Activated CD4-positive, alpha-beta memory T cell treated with anti-CD3 and anti-CD28 coated beads for 36 hours (primary cell): ENCODE measurements at regions of chrX and their contacts with region 1.

Region 1: GRCh38 chrX:68196939-68197791 is 236.1 kb downstream of the OPHN1 start:
- DNase-seq: peak; percentile 20
- H3K4me3 Mint-ChIP-seq: no peak overlapping the region
- H3K27ac Mint-ChIP-seq: no peak overlapping the region
- H3K4me1 Mint-ChIP-seq: peaks cover 9% of the 10 kb centered on the region
- H3K27me3 Mint-ChIP-seq: no peaks in the 10 kb centered on the region

Region 2: DNA sequence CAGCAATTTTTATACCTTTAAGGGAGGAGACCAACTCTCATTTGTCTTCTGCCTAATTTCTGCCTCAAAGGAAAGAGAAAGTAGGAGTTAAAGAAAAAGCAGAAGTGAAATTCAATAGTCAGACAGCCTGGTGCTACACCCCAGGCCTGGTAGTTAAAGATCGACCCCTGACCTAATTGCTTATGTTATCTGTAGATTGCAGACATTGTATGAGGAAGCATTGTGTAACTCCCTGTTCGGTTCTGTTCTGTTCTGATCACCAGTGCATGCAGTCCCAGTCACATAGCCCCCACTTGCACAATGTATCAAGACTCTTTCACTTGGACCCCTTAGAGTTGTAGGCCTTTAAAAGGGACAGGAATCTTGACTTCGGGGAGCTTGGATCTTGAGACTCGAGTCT is 989.3 kb before region 1 on chrX:
- CTCF ChIA-PET with region 1: no interaction called
- POLR2A ChIA-PET with region 1: no interaction called
- intact Hi-C with region 1: no loop called
- DNase-seq: no peak
- H3K4me3 Mint-ChIP-seq: no peak overlapping the region
- H3K27ac Mint-ChIP-seq: no peak overlapping the region
- H3K4me1 Mint-ChIP-seq: no peaks in the 10 kb centered on the region
- H3K27me3 Mint-ChIP-seq: no peaks in the 10 kb centered on the region

Region 3: DNA sequence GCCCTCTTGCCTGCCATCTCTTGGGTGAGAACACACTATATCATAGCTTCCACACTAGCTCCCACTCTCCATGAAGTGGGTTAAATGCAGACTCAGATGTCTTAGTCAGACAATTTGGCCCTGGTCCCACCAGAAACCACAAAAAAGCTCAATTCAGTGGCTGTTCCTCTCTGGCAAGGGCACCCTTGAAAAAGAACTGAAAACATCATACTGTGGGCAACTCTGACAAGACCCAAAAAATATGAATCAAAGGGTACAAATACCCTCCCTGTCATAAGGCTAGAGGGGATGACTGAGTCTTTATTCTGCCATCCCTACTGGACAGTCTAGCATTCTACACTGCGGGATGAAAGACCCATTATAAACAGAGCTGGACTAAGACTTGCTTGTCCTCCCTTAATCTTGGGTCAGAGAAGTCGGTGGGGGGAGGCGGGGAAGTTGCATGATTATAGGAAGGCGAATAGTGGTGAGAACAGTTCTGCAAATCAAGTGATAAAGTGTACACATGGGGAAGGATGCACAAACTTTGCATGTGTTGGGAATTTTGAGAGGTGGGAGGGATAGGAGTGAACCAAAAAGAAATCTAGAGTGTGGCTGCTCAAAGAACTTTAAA is 64.0 kb after region 1 on chrX:
- CTCF ChIA-PET with region 1: no interaction called
- POLR2A ChIA-PET with region 1: no interaction called
- intact Hi-C with region 1: no loop called
- DNase-seq: no peak
- H3K4me3 Mint-ChIP-seq: no peak overlapping the region
- H3K27ac Mint-ChIP-seq: no peak overlapping the region
- H3K4me1 Mint-ChIP-seq: no peaks in the 10 kb centered on the region
- H3K27me3 Mint-ChIP-seq: peaks cover 3% of the 10 kb centered on the region

Region 4: GRCh38 chrX:68462653-68463052 is 265.5 kb after region 1 on chrX:
- CTCF ChIA-PET with region 1: interaction called, 5 read pairs
- POLR2A ChIA-PET with region 1: no interaction called
- intact Hi-C with region 1: loop called (anchors 5 kb)
- DNase-seq: peak; percentile 10
- H3K4me3 Mint-ChIP-seq: no peak overlapping the region
- H3K27ac Mint-ChIP-seq: no peak overlapping the region
- H3K4me1 Mint-ChIP-seq: peaks cover 2% of the 10 kb centered on the region
- H3K27me3 Mint-ChIP-seq: no peaks in the 10 kb centered on the region

Region 5: GRCh38 chrX:68710870-68711576 is 513.9 kb after region 1 on chrX:
- CTCF ChIA-PET with region 1: interaction called, 7 read pairs
- POLR2A ChIA-PET with region 1: no interaction called
- intact Hi-C with region 1: loop called (anchors 2 kb)
- DNase-seq: peak; percentile 29
- H3K4me3 Mint-ChIP-seq: no peak overlapping the region
- H3K27ac Mint-ChIP-seq: no peak overlapping the region
- H3K4me1 Mint-ChIP-seq: no peaks in the 10 kb centered on the region
- H3K27me3 Mint-ChIP-seq: no peaks in the 10 kb centered on the region

Region 6: GRCh38 chrX:69285881-69286564 is 1088.9 kb after region 1 on chrX:
- CTCF ChIA-PET with region 1: no interaction called
- POLR2A ChIA-PET with region 1: no interaction called
- intact Hi-C with region 1: loop called (anchors 10 kb)
- DNase-seq: peak; percentile 56
- H3K4me3 Mint-ChIP-seq: no peak overlapping the region
- H3K27ac Mint-ChIP-seq: no peak overlapping the region
- H3K4me1 Mint-ChIP-seq: no peaks in the 10 kb centered on the region
- H3K27me3 Mint-ChIP-seq: no peaks in the 10 kb centered on the region